ENCODE measurements at regions of chrX and their contacts with region 1.

Region 1: GRCh38 chrX:136909706-136910564 is 29.4 kb upstream of the RBMX start:
- DNase-seq: peak; percentile 68 to 89 (median 71)
- ATAC-seq: peak; percentile 89
- H3K4me3 ChIP-seq: peak overlapping the region; percentile 22
- H3K4me1 ChIP-seq: no peaks in the 10 kb centered on the region
- CTCF ChIP-seq: no peak

Region 2: GRCh38 chrX:136541291-136541690 is 368.6 kb before region 1 on chrX:
- intact Hi-C with region 1: no loop called
- DNase-seq: no peak
- ATAC-seq: no peak
- H3K4me3 ChIP-seq: no peak overlapping the region
- H3K4me1 ChIP-seq: no peaks in the 10 kb centered on the region
- CTCF ChIP-seq: no peak

Region 3: GRCh38 chrX:136711147-136711546 is 198.8 kb before region 1 on chrX:
- intact Hi-C with region 1: loop called in 1 of 2 experiments (anchors 10 kb)
- DNase-seq: peak in 2 of 3 donors; percentile 46
- ATAC-seq: peak; percentile 49
- H3K4me3 ChIP-seq: no peak overlapping the region
- H3K4me1 ChIP-seq: no peaks in the 10 kb centered on the region
- CTCF ChIP-seq: no peak

Region 4: DNA sequence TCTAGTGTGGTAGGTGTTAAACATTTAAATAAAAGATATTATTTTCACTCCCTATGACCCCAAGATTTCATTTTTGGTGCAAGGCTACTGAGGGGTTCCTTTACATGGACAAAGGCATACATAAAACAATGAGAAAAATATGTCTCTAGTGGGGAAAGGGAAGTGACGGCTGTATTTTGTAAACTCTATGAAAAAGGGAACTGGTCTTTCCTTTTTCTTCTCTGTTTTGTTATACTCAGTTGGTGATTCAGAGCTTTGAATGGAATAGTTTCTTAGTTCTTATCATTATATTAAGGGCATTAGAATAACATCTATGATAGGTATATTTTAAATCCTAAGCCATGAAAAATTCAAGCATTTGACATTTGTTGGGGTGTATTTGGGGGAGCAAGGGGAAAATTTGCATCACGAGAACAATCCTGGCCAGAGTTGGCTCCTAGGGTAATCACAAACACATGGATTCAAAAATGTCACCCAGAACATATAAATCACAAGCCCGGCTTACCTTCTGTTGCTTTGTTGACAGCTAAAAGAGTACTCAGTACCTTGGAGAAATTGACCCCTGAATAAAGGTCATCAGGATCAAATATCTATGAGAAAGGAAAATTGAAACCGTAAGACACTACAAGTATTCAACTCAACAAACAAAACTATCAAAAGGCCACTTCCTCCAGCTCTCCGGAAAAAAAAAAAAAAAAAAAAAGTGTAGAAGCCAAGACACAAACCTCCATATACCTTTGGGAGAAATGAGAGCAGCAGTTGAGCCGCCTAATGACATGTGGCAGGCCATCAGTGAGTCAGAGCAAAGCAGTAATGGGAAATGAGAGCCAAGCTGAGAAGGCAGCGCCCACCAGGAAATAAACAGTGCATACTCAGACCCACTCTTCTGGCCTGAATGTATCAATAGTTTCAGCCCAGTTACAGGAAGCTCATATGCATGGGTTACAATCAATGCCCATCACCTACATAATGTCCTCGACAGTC is 162.6 kb before region 1 on chrX:
- intact Hi-C with region 1: no loop called
- DNase-seq: no peak
- ATAC-seq: peak; percentile 28
- H3K4me3 ChIP-seq: no peak overlapping the region
- H3K4me1 ChIP-seq: no peaks in the 10 kb centered on the region
- CTCF ChIP-seq: no peak

Measured in mucosa of descending colon (tissue), 3 donors.